ENCODE measurements at regions of chr12 and their contacts with region 1.

Region 1: DNA sequence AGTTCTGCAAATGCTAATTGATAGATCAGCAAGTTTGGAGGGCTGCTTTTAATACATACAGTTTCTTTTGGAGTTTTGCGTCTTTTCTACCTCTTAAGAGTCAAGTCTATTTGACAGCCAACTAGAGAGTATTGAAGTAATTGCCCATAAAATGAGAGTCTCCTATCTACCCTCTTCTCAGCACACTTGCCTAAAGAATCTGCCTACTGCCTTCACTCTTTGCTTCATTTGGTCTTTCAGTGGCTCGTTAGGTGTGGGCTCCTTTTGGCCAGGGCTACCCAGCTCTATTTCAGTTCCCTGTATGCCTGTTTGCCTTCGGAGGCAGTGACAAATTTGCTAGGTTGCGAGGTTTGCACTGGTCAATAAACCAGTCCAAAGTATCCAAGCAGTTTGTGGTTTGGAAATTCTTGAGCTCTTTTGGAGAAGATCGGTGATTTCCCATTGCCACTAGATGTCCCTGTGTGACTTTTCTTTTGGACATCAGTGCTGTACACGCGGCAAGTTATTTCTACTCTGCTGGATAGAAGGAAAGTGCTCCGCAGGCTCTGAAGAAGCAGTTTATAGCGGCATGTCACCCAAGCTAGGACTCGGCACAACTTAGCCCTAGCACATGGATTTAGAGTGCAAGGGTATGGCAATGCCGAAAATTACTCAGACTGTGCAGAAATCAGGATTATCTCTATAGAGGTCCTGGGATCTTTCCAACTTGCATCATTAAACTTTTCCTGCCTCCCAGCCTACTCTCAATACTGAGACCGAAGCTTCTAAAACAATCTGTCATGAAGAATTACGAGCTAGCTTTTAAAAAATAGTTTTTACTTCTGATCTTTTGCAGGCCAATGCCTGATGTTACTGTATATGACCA is 38.6 kb downstream of the MGST1 start:
- DNase-seq: peak; percentile 75 to 78
- H3K4me3 ChIP-seq: no peak overlapping the region
- H3K4me3 Mint-ChIP-seq: no peak overlapping the region
- H3K27ac Mint-ChIP-seq: no peak overlapping the region
- H3K4me1 ChIP-seq: peaks cover 8% of the 10 kb centered on the region; the same call in 1 of the 2 replicates
- H3K4me1 Mint-ChIP-seq: peaks cover 9% of the 10 kb centered on the region
- H3K27me3 ChIP-seq: no peaks in the 10 kb centered on the region
- H3K27me3 Mint-ChIP-seq: no peaks in the 10 kb centered on the region
- CTCF ChIP-seq: peak; percentile 74 to 82

Region 2: DNA sequence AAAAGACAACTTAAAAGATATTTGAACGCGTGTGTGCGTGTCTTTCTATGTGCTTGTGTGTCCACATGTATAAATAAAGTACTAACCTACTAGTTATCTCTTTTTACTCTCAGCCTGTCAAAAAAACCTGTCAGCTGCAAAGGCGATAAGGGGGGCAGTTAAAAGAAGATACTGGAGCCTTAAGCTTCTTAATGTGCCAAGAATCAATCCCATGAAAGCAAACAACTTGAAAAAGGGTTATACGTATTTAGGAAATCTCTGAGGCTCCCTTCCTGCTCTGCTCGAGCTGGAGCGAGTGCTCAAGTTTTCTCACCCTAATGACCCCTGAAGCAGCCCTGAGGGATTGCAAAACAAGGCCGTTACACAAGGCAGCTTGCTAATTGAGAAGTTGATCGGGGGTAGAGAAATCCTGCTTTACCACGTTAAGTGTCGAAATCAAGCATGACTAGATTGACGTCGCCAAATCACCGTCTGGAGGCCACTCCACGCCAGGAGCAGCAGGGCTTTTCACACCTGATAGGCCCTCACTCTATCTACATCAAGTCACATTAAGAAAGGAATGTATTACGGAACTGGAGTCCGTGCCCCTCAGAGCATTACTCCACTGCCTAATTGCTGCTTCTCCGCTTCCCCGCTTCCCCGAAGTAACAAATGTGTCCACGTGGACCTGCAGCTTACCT is 187.5 kb after region 1 on chr12:
- CTCF ChIA-PET with region 1: no interaction called
- POLR2A ChIA-PET with region 1: no interaction called
- intact Hi-C with region 1: no loop called
- DNase-seq: peak in 1 of 2 experiments; percentile 43
- H3K4me3 ChIP-seq: no peak overlapping the region
- H3K4me3 Mint-ChIP-seq: no peak overlapping the region
- H3K27ac Mint-ChIP-seq: no peak overlapping the region
- H3K4me1 ChIP-seq: no peaks in the 10 kb centered on the region
- H3K4me1 Mint-ChIP-seq: no peaks in the 10 kb centered on the region
- H3K27me3 ChIP-seq: no peaks in the 10 kb centered on the region
- H3K27me3 Mint-ChIP-seq: no peaks in the 10 kb centered on the region
- CTCF ChIP-seq: no peak

Region 3: DNA sequence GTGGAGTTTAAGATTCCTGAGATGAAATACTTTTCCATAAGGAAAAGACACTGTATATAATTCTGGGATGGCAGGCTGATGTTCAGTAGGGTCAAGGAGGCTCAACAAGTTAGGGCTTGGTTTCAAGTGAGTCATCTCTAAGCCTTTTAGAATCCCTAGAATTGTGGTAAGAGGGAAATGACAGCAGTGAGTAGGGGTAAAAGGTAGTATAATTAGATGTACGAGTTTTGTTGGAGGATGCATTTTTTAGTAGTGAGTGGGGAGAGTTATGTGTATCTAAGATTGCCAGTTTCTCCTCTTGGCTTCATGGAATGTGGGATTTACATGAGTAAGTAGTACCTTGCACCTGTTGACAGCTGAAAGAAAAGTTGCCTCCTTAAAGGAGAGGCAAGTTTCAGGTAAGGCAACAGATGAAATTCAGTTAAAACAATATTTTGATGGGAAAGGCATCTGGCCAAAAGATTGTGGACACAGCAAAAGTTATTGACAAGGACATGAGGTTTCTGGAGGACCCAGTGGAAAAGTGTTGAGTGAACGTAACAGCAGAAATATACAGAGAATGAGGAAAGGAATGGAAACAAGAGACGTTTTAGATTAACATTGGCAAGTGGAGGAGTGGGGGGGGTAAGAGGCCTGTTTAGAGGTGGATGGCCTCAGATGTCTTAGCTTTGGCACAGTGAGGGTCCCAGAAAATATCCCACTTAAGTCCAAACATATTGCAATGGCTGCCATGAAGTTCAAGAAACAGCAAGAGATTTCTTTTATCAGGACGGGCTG is 198.1 kb after region 1 on chr12:
- CTCF ChIA-PET with region 1: no interaction called
- POLR2A ChIA-PET with region 1: no interaction called
- intact Hi-C with region 1: loop called (anchors 5 kb)
- DNase-seq: no peak
- H3K4me3 ChIP-seq: no peak overlapping the region
- H3K4me3 Mint-ChIP-seq: no peak overlapping the region
- H3K27ac Mint-ChIP-seq: peak overlapping the region; percentile 12
- H3K4me1 ChIP-seq: peaks cover 12% of the 10 kb centered on the region
- H3K4me1 Mint-ChIP-seq: peaks cover 16% of the 10 kb centered on the region
- H3K27me3 ChIP-seq: no peaks in the 10 kb centered on the region
- H3K27me3 Mint-ChIP-seq: no peaks in the 10 kb centered on the region
- CTCF ChIP-seq: no peak

Region 4: DNA sequence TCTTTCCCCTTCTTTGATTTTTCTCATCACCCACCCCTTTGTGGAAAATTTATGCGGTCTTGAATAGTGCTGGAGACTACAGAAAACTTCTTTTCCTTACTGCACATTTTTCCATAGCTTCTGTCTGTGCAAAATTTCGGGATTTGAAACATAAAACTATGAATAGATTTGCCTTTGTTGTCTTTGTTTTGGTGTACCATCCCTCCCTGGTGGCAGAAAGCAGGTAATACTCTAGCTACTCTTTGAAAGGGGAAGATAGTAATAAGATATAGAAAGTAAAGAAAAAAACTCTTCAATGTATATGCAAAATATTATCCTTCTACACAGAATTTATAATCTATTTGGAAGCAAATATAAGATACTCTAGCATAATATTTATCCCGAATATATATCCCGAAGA is 299.1 kb after region 1 on chr12:
- CTCF ChIA-PET with region 1: interaction called, 33 read pairs
- POLR2A ChIA-PET with region 1: no interaction called
- intact Hi-C with region 1: loop called (anchors 1 kb)
- DNase-seq: no peak
- H3K4me3 ChIP-seq: no peak overlapping the region
- H3K4me3 Mint-ChIP-seq: no peak overlapping the region
- H3K27ac Mint-ChIP-seq: no peak overlapping the region
- H3K4me1 ChIP-seq: no peaks in the 10 kb centered on the region
- H3K4me1 Mint-ChIP-seq: no peaks in the 10 kb centered on the region
- H3K27me3 ChIP-seq: no peaks in the 10 kb centered on the region
- H3K27me3 Mint-ChIP-seq: peaks cover 14% of the 10 kb centered on the region
- CTCF ChIP-seq: peak; percentile 29 to 43

Region 5: DNA sequence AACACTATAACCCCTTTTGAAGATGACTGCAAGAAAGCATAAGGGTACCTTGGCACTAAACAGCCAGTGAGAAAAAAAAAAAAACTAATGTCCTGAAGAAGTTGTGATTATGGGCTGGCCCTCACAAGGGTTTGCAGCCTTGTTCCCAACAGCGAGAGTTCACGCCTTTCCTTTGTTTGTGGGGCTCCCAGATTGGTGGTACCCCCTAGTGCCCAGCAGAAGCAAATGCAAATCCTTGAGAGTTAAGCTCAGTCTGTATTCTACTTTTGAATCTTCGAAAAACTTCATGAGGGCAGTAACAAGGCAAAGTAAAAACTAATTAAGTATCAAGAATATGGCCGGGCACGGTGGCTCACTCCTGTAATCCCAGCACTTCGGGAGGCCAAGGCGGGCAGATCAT is 458.9 kb after region 1 on chr12:
- CTCF ChIA-PET with region 1: interaction called, 20 read pairs
- POLR2A ChIA-PET with region 1: no interaction called
- intact Hi-C with region 1: loop called (anchors 1 kb)
- DNase-seq: peak in 1 of 2 experiments; percentile 20
- H3K4me3 ChIP-seq: no peak overlapping the region
- H3K4me3 Mint-ChIP-seq: no peak overlapping the region
- H3K27ac Mint-ChIP-seq: no peak overlapping the region
- H3K4me1 ChIP-seq: no peaks in the 10 kb centered on the region
- H3K4me1 Mint-ChIP-seq: no peaks in the 10 kb centered on the region
- H3K27me3 ChIP-seq: no peaks in the 10 kb centered on the region
- H3K27me3 Mint-ChIP-seq: no peaks in the 10 kb centered on the region
- CTCF ChIP-seq: peak in 1 of 2 experiments; percentile 44

Region 6: DNA sequence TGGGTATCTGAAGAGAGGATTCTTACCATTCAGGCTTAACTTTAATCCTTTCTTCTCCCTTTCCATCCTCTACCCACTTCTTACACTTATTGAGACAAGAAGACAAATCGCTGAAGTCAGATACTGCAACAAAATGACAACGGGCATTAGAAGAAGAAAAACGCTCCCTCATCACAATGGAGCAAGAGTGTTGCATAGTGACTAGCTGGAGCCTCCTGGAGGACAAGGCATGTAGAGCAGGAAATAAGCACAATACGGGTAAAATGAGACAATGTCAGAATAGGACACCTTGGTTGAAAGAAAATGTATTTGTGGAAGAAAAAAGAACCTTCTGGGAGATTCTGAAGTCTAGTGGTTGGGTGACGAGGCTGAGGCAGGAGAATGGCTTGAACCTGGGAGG is 1203.0 kb after region 1 on chr12:
- CTCF ChIA-PET with region 1: no interaction called
- POLR2A ChIA-PET with region 1: no interaction called
- intact Hi-C with region 1: loop called (anchors 5 kb)
- DNase-seq: peak; percentile 52 to 56
- H3K4me3 ChIP-seq: no peak overlapping the region
- H3K4me3 Mint-ChIP-seq: no peak overlapping the region
- H3K27ac Mint-ChIP-seq: no peak overlapping the region
- H3K4me1 ChIP-seq: no peaks in the 10 kb centered on the region
- H3K4me1 Mint-ChIP-seq: no peaks in the 10 kb centered on the region
- H3K27me3 ChIP-seq: no peaks in the 10 kb centered on the region
- H3K27me3 Mint-ChIP-seq: peaks cover 5% of the 10 kb centered on the region
- CTCF ChIP-seq: peak; percentile 77 to 81

Measured in Caco-2 (cell line).